Posterior vena cava (tissue), 2 donors: ENCODE measurements at regions of chr14 and their contacts with region 1.

Region 1: DNA sequence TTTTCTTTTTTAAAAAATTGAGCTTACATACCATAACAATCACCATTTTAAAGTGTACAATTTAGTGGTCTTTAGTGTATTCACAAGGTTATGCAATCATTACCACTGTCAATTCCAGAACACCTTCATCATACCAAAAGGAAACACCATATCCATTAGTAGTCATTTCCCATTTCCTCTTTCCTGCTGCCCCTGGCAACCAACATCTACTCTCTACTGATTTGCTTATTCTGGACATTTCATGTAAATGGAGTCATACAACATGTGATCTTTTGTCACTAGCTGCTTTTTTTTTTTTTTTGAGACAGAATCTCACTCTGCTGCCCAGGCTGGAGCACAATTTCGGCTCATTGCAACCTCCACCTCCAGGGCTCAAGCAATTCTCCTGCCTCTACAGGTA is 66.8 kb upstream of the CFL2 start:
- DNase-seq: no peak

Region 2: DNA sequence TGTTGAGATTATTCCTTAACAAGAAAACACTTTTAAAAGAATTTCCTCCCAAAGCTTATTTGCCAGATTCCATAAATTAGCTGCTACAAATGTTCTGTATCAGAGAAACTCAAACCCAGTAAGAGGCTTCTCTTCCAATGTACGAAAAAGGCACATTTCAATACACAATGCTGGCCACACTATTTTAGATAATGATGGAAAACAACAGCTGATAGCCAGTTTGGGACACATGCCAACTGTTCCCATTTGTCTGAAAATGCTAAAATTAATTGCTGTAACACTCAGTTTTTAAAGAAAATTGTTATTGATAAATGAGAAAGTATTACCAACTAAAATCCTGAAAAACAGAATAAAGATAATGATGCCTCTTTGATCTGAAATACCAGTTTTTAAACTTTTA is 71.2 kb before region 1 on chr14:
- intact Hi-C with region 1: no loop called
- DNase-seq: no peak

Region 3: GRCh38 chr14:34865889-34866574 is 84.8 kb after region 1 on chr14:
- intact Hi-C with region 1: loop called in 1 of 2 experiments (anchors 10 kb)
- DNase-seq: no peak